ENCODE measurements at regions of chr22 and their contacts with region 1.

Region 1: DNA sequence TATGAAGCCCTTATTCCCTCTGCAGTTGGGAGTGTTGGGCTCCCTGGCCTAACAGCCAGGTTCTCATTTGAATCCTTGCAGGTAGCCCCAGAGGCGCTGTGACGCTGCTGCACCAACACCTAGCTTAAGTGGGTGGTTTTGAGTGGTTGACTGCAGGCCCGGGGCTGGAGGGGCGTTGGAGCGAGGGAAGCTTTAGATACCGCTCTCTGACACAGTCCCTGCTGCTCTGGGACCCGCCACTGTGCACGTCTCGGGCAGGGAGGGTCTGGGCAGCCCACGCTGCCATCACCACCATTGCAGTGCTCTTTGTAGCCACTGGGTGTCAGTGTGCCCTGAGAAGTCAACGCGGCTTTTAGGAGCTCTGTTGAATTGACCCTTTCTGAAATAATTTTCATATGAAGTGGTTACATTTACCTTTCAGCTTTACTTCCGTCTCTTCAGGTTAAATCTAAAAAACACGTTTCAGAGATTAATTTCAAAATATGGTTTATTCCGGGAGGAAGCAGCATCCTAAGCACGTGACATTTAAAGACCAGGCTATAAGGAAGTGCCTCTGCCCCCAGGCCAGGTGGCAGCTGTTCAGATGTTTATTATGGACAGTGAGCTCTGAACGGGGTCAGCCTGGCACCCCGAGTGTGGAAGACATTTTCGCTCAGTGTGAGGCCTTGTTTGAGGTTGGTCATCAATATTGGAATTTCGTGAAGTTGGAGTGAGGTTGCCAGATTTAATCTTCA is 30.9 kb upstream of the PARVB start:
- DNase-seq: peak; percentile 72
- ATAC-seq: peak; percentile 86
- H3K4me3 Mint-ChIP-seq: no peak overlapping the region
- H3K27ac Mint-ChIP-seq: no peak overlapping the region
- H3K4me1 Mint-ChIP-seq: peaks cover 21% of the 10 kb centered on the region
- H3K27me3 Mint-ChIP-seq: no peaks in the 10 kb centered on the region
- CTCF ChIP-seq: peak; percentile 96

Region 2: GRCh38 chr22:43931771-43932170 is 61.4 kb before region 1 on chr22:
- CTCF ChIA-PET with region 1: no interaction called
- POLR2A ChIA-PET with region 1: no interaction called
- intact Hi-C with region 1: no loop called
- DNase-seq: no peak
- ATAC-seq: no peak
- H3K4me3 Mint-ChIP-seq: no peak overlapping the region
- H3K27ac Mint-ChIP-seq: no peak overlapping the region
- H3K4me1 Mint-ChIP-seq: no peaks in the 10 kb centered on the region
- H3K27me3 Mint-ChIP-seq: peaks cover 4% of the 10 kb centered on the region
- CTCF ChIP-seq: no peak

Region 3: DNA sequence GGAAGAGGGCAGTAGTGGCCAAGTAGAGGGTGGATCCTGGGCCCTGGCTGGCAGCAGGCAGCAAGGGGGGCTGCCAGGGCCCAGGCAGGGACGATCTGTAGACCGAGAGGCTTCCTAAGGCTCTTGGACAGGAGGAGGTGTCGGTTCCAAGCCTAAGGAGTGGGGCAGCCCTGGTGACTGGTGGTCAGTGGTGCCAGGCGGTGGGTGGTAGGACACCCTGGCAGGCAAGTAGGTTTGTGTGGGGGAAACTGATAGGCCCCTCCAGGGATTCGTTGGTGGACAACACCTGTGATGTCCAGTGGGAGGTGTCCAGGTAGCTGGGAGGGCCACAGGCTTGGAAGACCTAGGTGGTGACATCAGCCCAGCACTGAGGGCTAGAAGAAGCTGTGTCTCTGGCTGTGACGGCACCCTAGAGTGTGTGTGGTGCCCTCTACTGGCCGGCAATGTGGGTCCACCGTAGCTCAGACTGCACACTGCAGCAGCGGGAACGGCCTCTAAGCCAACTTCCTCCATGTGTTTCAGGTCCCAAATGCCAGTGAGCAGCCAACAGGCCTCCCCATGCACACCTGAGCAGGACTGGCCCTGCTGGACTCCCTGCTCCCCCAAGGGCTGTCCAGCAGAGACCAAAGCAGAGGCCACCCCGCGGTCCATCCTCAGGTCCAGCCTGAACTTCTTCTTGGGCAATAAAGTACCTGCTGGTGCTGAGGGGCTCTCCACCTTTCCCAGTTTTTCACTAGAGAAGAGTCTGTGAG is 47.4 kb before region 1 on chr22:
- CTCF ChIA-PET with region 1: no interaction called
- POLR2A ChIA-PET with region 1: no interaction called
- intact Hi-C with region 1: no loop called
- DNase-seq: peak; percentile 86
- ATAC-seq: peak; percentile 99
- H3K4me3 Mint-ChIP-seq: no peak overlapping the region
- H3K27ac Mint-ChIP-seq: no peak overlapping the region
- H3K4me1 Mint-ChIP-seq: no peaks in the 10 kb centered on the region
- H3K27me3 Mint-ChIP-seq: peaks cover 2% of the 10 kb centered on the region
- CTCF ChIP-seq: peak; percentile 83

Region 4: DNA sequence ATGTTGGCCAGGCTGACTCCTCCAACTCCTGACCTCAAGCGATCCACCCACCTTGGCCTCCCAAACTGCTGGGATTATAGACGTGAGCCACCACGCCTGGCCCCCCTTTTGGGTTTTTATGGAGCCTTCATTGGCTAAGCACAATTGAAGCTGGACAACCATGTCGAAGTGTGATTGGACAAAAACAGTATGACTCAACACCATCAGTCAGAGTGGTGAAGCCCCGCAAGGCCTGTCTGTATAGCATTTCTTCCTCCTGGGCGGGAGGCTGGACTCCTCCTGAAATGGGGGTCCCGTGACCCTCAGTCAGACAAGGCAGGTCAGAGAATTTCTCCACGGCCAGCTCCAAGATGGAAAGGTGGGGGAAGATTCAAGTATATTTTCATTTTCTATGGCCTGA is 27.8 kb after region 1 on chr22:
- CTCF ChIA-PET with region 1: interaction called, 11 read pairs
- POLR2A ChIA-PET with region 1: interaction called, 6 read pairs
- intact Hi-C with region 1: no loop called
- DNase-seq: no peak
- ATAC-seq: no peak
- H3K4me3 Mint-ChIP-seq: no peak overlapping the region
- H3K27ac Mint-ChIP-seq: no peak overlapping the region
- H3K4me1 Mint-ChIP-seq: peaks cover 22% of the 10 kb centered on the region
- H3K27me3 Mint-ChIP-seq: peaks cover 5% of the 10 kb centered on the region
- CTCF ChIP-seq: no peak

Region 5: GRCh38 chr22:44033694-44034093 is 40.5 kb after region 1 on chr22:
- CTCF ChIA-PET with region 1: interaction called, 19 read pairs
- POLR2A ChIA-PET with region 1: no interaction called
- intact Hi-C with region 1: no loop called
- DNase-seq: no peak
- ATAC-seq: no peak
- H3K4me3 Mint-ChIP-seq: no peak overlapping the region
- H3K27ac Mint-ChIP-seq: no peak overlapping the region
- H3K4me1 Mint-ChIP-seq: peaks cover 12% of the 10 kb centered on the region
- H3K27me3 Mint-ChIP-seq: peaks cover 2% of the 10 kb centered on the region
- CTCF ChIP-seq: no peak

Region 6: DNA sequence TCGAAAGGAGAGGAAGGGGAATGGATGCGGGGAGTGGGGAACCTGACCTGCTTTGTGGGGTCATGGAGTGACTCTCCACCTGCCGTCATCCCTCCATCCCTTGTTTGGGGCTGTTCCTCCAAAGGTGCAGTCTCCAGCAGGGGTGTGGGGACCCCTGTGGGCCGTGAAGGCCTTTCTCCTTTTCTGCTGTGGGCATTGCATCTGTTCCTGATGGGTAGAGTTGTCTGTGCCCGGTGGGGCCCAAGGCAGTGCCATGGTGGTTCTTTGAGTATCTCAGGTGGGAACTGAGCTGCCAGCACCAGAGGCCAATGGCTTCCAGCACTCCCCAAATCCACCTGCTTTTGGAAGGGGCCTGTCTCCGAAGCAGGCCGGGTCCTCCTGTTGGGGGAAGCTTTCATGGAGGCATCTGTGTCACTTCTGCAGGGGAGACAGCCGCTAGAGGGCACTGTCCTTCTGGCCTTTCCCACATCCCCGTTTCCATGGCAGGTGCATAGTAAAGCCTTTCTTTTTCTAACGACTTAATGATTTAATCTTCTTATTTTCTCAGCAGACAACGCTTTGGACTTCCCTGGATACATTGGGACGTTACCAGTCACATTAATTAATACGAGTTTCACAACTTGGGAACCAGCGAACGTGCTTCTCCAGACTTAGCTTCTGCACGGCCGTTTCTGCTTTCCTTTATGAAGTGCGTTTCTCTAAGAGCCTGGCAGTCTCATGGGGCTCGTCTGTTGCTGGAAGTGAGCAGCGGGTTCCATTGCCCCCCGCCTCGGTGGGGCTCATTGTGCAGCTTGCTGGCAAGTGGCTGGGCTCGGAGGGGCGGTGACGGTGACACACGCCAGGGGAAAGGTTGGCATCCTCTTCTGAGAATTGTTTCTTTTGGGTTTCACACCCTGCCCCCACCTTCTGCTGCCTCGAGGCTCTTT is 88.0 kb after region 1 on chr22:
- CTCF ChIA-PET with region 1: interaction called, 85 read pairs
- POLR2A ChIA-PET with region 1: no interaction called
- intact Hi-C with region 1: loop called (anchors 5 kb)
- DNase-seq: peak; percentile 86
- ATAC-seq: peak; percentile 58
- H3K4me3 Mint-ChIP-seq: no peak overlapping the region
- H3K27ac Mint-ChIP-seq: no peak overlapping the region
- H3K4me1 Mint-ChIP-seq: no peaks in the 10 kb centered on the region
- H3K27me3 Mint-ChIP-seq: no peaks in the 10 kb centered on the region
- CTCF ChIP-seq: peak; percentile 87

Region 7: DNA sequence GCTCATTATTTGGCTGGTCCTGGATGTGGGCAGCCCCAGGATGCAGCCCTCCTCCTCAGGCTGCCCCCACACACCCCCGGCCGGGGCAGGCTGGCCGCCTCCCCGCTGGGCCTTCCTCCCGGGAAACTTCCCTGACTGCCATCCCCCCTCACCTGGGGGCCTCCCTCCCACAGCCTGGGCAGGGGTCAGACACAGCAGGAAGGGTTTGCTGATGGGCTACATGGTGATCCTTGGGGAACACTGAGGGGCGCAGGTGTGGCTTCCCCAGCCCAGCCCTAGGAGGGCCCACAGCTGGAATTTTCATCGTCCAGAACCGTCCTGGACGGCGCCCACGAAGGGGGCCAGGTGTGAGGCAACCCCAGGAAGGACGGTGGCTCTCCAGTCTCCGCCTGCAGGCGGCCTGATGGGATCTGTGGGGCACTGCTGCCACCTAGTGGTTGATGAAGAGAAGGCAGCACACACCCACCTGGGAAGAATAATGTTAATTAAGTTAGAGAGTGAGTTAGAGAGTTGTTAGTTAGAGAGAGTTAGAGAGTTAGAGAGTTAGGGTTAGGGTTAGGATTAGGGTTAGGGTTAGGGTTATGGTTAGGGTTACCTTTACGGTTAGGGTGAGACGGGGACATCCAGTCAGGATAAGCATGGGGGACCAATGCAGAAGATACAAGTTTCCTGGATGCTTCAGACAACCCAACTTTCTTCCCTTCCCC is 632.9 kb after region 1 on chr22:
- CTCF ChIA-PET with region 1: interaction called, 49 read pairs
- POLR2A ChIA-PET with region 1: no interaction called
- intact Hi-C with region 1: loop called (anchors 10 kb)
- DNase-seq: peak; percentile 83
- ATAC-seq: peak; percentile 85
- H3K4me3 Mint-ChIP-seq: no peak overlapping the region
- H3K27ac Mint-ChIP-seq: no peak overlapping the region
- H3K4me1 Mint-ChIP-seq: peaks cover 6% of the 10 kb centered on the region
- H3K27me3 Mint-ChIP-seq: no peaks in the 10 kb centered on the region
- CTCF ChIP-seq: peak; percentile 98

Measured in activated CD8-positive, alpha-beta T cell treated with anti-CD3 and anti-CD28 coated beads for 36 hours (primary cell).